ENCODE measurements at regions of chr12 and their contacts with region 1.

Region 1: DNA sequence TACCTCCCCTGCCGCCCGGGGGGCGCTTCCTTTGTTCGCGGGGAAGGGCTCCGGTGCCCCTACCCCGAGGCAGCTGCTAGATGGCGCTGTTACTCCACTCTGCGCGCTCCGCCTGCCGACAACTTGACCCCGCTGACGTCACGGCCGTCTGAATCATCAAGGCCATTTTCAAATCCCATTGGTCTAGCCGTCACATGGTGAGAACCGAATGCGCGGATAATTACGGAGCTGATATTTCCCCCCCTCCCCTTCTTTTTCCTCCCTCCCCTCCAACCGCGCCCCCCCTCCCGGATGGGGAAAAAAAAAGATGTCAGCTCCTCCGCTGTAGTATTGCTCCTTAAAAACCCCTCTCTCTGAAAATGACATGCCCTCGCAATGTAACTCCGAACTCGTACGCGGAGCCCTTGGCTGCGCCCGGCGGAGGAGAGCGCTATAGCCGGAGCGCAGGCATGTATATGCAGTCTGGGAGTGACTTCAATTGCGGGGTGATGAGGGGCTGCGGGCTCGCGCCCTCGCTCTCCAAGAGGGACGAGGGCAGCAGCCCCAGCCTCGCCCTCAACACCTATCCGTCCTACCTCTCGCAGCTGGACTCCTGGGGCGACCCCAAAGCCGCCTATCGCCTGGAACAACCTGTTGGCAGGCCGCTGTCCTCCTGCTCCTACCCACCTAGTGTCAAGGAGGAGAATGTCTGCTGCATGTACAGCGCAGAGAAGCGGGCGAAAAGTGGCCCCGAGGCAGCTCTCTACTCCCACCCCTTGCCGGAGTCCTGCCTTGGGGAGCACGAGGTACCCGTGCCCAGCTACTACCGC is at the start of gene HOXC10:
- DNase-seq: peak; percentile 87
- CTCF ChIP-seq: peak; percentile 71

Region 2: DNA sequence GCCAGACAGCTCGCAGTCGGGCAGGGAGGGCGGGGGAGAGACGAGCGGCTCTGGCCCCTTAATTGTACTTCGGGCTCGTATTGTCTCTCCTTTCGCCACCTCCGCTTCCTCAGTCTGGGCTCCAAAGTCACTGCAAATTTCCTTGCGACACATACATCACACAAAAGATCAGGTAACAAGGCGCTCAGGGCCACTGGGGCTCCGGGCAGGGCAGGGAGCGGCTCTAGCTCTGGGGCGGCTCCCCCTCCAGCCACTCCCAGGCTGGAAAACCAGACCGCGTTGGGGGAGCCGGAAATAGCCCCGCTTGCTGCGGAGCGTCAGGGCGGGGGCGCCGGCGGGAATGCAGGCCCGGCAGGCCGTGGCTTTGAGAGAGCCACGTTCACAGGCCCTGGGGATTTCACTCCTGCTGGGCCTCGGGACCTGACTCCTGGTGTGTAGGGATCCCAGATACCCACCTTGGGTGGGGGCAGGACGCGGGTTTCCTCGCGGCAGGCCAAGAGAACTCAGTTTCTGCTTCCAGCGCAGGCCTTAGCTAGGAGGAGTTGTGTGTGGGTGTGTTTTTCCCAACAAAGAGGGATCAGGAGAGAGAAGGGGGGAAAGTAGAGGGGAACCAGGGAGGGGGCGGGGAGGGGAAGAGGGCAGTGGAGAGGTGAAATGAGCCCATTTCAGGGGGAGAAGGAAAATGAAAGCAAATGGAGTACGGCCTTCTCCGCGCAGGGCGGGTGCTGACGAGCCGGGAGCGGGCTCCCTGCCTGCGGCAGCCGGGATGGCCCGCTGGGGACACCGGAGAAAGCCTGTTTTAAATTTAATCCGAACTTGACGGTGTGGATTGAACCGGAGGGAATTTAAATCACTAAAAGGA is 10.5 kb after region 1 on chr12:
- CTCF ChIA-PET with region 1: interaction called, 19 read pairs
- POLR2A ChIA-PET with region 1: no interaction called
- DNase-seq: no peak
- CTCF ChIP-seq: no peak

Measured in GM10248 (cell line).